ENCODE measurements at regions of chr2 and their contacts with region 1.

Region 1: DNA sequence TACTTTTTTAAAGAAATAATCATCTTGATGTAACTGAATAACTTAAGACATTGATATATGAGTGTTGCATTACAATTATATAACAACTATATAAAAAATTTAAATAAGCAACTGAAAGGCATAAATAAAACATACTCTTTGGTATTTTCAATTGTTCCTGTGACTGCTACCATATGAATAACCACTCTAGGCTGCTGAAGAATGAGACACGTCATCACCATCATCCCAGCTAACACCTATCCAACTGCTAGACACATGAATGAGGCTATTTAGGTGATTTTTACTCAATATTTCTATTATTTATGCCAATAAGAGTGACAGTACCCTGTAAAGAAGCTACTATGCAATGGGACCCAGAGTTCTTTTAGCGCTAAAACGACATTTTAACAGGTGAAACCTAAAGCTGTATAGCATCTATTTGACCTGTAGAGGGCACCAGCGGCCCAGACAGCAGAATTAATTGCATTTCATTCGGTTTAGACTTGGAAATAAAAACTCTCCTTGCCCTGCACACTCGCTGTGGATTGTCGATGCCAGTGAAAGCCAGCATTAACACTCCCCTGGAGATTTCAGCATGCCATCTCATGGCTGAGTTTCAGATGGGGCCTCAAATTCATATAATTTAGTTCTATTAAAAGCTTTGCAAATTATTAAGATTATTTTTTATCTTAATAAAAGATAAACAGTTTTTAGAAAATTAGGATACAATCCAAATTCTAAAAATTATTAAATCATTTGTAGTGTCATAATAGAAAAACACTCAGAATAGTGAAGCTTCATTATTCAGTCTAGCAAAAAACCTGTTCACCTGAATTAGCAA is 89.4 kb upstream of the MAP2 start:
- DNase-seq: peak; percentile 68
- ATAC-seq: peak; percentile 47
- H3K4me3 Mint-ChIP-seq: no peak overlapping the region
- H3K27ac Mint-ChIP-seq: no peak overlapping the region
- H3K4me1 Mint-ChIP-seq: no peaks in the 10 kb centered on the region
- H3K27me3 Mint-ChIP-seq: no peaks in the 10 kb centered on the region

Region 2: GRCh38 chr2:208392300-208393080 is 941.9 kb before region 1 on chr2:
- CTCF ChIA-PET with region 1: no interaction called
- POLR2A ChIA-PET with region 1: no interaction called
- intact Hi-C with region 1: loop called in 1 of 2 experiments (anchors 2 kb)
- DNase-seq: no peak
- ATAC-seq: no peak
- H3K4me3 Mint-ChIP-seq: no peak overlapping the region
- H3K27ac Mint-ChIP-seq: no peak overlapping the region
- H3K4me1 Mint-ChIP-seq: no peaks in the 10 kb centered on the region
- H3K27me3 Mint-ChIP-seq: peaks cover 6% of the 10 kb centered on the region

Region 3: GRCh38 chr2:208698114-208698513 is 636.3 kb before region 1 on chr2:
- CTCF ChIA-PET with region 1: no interaction called
- POLR2A ChIA-PET with region 1: no interaction called
- intact Hi-C with region 1: no loop called
- DNase-seq: no peak
- ATAC-seq: no peak
- H3K4me3 Mint-ChIP-seq: no peak overlapping the region
- H3K27ac Mint-ChIP-seq: no peak overlapping the region
- H3K4me1 Mint-ChIP-seq: no peaks in the 10 kb centered on the region
- H3K27me3 Mint-ChIP-seq: no peaks in the 10 kb centered on the region

Region 4: GRCh38 chr2:209253544-209253943 is 80.9 kb before region 1 on chr2:
- CTCF ChIA-PET with region 1: no interaction called
- POLR2A ChIA-PET with region 1: no interaction called
- intact Hi-C with region 1: no loop called
- DNase-seq: no peak
- ATAC-seq: no peak
- H3K4me3 Mint-ChIP-seq: no peak overlapping the region
- H3K27ac Mint-ChIP-seq: no peak overlapping the region
- H3K4me1 Mint-ChIP-seq: no peaks in the 10 kb centered on the region
- H3K27me3 Mint-ChIP-seq: no peaks in the 10 kb centered on the region

Region 5: GRCh38 chr2:209305746-209306196 is 28.6 kb before region 1 on chr2:
- CTCF ChIA-PET with region 1: no interaction called
- POLR2A ChIA-PET with region 1: no interaction called
- intact Hi-C with region 1: no loop called
- DNase-seq: no peak
- ATAC-seq: no peak
- H3K4me3 Mint-ChIP-seq: no peak overlapping the region
- H3K27ac Mint-ChIP-seq: no peak overlapping the region
- H3K4me1 Mint-ChIP-seq: no peaks in the 10 kb centered on the region
- H3K27me3 Mint-ChIP-seq: no peaks in the 10 kb centered on the region

Region 6: DNA sequence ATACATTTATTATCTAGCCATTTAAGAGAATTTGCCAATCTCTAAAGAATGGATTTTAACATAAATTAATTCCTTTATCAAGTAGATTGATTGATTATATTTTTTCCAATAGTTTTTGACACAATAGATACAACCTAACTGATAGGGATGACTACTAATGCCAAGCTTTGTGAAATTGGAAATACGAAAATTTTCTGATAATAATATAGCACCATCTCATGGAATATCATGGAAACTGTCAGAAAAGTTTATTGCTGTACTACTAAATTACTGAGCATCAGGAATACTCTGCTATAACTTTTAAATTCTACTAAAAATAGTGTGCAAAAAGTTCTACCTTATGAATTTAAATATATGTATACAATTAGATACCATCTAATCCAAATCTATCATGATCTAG is 12.4 kb before region 1 on chr2:
- CTCF ChIA-PET with region 1: interaction called, 11 read pairs
- POLR2A ChIA-PET with region 1: no interaction called
- intact Hi-C with region 1: no loop called
- DNase-seq: no peak
- ATAC-seq: no peak
- H3K4me3 Mint-ChIP-seq: no peak overlapping the region
- H3K27ac Mint-ChIP-seq: no peak overlapping the region
- H3K4me1 Mint-ChIP-seq: no peaks in the 10 kb centered on the region
- H3K27me3 Mint-ChIP-seq: no peaks in the 10 kb centered on the region

Region 7: GRCh38 chr2:209423562-209424198 is 89.3 kb after region 1 on chr2 and contains the start of gene MAP2:
- CTCF ChIA-PET with region 1: interaction called, 4 read pairs
- POLR2A ChIA-PET with region 1: no interaction called
- intact Hi-C with region 1: loop called (anchors 2 to 5 kb)
- DNase-seq: peak; percentile 87
- ATAC-seq: peak; percentile 98
- H3K4me3 Mint-ChIP-seq: peak within 1 kb of the TSS; percentile 67
- H3K27ac Mint-ChIP-seq: no peak within 1 kb of the TSS
- H3K4me1 Mint-ChIP-seq: peaks cover 10% of the 10 kb centered on the region
- H3K27me3 Mint-ChIP-seq: peaks cover 32% of the 10 kb centered on the region
- total RNA-seq, gene MAP2: 0.34 to 0.39 TPM

Region 8: DNA sequence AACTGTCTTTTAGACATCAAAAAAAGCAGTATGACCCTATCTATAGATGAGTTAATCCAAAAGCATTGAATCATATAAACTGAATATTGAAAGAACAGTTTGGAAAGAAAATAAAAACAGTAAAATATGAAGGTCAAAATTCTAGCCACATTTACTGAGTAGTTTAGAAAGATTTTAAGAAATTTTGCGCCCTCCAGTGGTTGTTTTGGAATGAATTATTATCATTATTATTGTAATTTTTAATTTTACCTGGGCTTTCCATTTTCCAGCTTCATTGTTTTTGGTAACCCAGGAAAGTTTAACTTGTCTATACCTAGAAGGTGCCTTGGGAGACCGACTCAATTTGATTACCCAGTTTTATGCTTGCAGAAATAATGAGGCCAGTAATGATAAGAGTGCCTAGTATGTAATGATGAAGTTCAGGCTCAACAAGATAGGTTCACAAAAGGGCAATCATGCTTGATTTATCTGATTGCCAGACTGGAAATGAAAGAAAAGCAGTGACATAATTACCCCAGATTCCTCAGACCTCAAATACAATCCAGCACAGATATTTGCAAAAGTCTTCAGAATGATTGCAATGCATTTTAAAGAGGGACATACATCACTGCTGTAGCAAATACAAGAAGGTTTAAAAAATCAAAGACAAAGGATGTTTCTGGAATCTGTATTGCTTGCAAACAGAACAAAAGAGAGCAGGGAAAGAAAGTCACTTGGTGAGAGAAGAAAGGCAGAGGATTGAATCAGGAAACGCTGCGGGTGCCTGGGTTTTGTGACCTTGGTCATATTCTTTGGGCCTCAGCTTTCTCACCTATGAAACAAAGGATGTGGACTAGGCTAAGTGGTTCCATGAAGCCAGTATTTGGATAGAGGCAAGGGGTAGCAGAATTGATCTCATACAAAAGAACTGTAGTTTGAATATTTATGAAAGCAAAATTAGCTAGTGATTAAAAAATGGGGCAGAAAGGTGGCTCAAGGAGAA is 243.3 kb after region 1 on chr2:
- CTCF ChIA-PET with region 1: interaction called, 24 read pairs
- POLR2A ChIA-PET with region 1: no interaction called
- intact Hi-C with region 1: loop called (anchors 1 kb)
- DNase-seq: no peak
- ATAC-seq: no peak
- H3K4me3 Mint-ChIP-seq: no peak overlapping the region
- H3K27ac Mint-ChIP-seq: no peak overlapping the region
- H3K4me1 Mint-ChIP-seq: peaks cover 6% of the 10 kb centered on the region
- H3K27me3 Mint-ChIP-seq: peaks cover 2% of the 10 kb centered on the region

Region 9: DNA sequence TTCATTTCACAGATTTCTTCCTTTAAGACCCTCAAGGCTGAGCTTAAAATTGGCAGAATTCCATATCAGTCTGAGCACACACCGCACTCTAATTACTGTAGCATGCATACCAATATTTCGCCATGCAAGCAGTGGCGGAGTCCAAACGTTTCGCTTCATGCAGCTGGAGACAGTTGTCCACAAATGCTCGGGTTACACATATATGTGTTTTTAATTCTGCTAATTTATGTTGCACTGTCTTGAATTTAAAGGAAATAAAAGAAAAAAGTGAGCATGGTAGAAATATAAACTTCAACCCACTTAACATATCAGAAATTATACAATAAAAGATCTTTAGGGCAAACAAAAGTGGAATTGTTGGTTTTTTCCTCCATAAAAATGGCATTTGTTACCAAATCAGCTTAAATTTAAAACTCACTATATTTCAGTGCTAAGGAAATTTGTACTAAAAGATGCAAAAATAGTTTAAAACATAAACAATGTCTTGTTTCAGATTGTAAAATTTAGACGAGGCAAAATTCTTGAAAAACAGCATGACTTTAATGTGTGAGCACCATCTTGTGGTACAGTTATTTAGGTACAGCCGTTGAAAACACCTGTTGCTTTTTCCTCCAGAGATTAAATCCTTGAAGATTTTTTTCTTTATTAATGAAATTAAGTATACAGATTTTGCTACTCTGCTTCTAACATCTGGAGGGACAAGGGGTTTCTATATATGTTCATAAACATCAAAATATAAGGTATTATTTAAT is 860.9 kb after region 1 on chr2:
- CTCF ChIA-PET with region 1: interaction called, 6 read pairs
- POLR2A ChIA-PET with region 1: no interaction called
- intact Hi-C with region 1: loop called (anchors 2 to 5 kb)
- DNase-seq: no peak
- ATAC-seq: no peak
- H3K4me3 Mint-ChIP-seq: no peak overlapping the region
- H3K27ac Mint-ChIP-seq: no peak overlapping the region
- H3K4me1 Mint-ChIP-seq: no peaks in the 10 kb centered on the region
- H3K27me3 Mint-ChIP-seq: no peaks in the 10 kb centered on the region